AG04450 (cell line): ENCODE measurements at regions of chr1 and their contacts with region 1.

Region 1: GRCh38 chr1:52686830-52687229 is 11.3 kb downstream of the COA7 start:
- DNase-seq: no peak
- H3K4me3 ChIP-seq: no peak overlapping the region
- H3K27ac ChIP-seq: no peak overlapping the region
- H3K27me3 ChIP-seq: no peaks in the 10 kb centered on the region
- CTCF ChIP-seq: no peak

Region 2: GRCh38 chr1:52426371-52426770 is 260.5 kb before region 1 on chr1:
- CTCF ChIA-PET with region 1: interaction called, 12 read pairs
- POLR2A ChIA-PET with region 1: no interaction called
- DNase-seq: peak; percentile 45
- H3K4me3 ChIP-seq: no peak overlapping the region
- H3K27ac ChIP-seq: no peak overlapping the region
- H3K27me3 ChIP-seq: no peaks in the 10 kb centered on the region
- CTCF ChIP-seq: no peak

Region 3: DNA sequence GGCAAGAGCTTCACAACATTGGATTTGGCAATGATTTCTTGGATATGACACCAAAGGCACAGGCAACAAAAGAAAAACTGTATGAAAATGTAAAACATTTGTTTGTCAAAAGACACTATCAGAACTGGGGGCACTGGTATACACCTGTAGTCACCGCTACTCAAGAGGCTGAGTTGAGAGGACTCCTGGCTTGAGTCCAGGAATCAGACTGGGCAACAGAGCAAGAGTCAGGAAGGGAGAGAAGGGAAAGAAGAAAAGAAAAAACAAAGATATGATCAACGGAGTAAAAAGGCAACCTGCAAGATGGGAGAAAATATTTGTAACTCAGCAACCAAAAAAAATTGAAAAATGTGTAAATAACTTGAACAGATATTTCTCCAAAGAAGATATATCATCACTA is 127.9 kb before region 1 on chr1:
- CTCF ChIA-PET with region 1: no interaction called
- POLR2A ChIA-PET with region 1: no interaction called
- DNase-seq: no peak
- H3K4me3 ChIP-seq: no peak overlapping the region
- H3K27ac ChIP-seq: no peak overlapping the region
- H3K27me3 ChIP-seq: no peaks in the 10 kb centered on the region
- CTCF ChIP-seq: no peak

Region 4: GRCh38 chr1:52697795-52698674 is 11.2 kb after region 1 on chr1 and contains the start of gene COA7:
- CTCF ChIA-PET with region 1: interaction called, 15 read pairs
- POLR2A ChIA-PET with region 1: no interaction called
- DNase-seq: no peak
- H3K4me3 ChIP-seq: peak within 1 kb of the TSS; percentile 83
- H3K27ac ChIP-seq: peak within 1 kb of the TSS; percentile 65
- H3K27me3 ChIP-seq: no peaks in the 10 kb centered on the region
- CTCF ChIP-seq: no peak
- polyA plus RNA-seq, gene COA7: 12.0 and 13.8 TPM in 2 replicates